Common myeloid progenitor, CD34-positive (primary cell): ENCODE measurements at regions of chr15 and their contacts with region 1.

Region 1: GRCh38 chr15:39786447-39787056 is 3.9 kb upstream of the FSIP1 start:
- DNase-seq: peak; percentile 66 to 75 (median 71)
- H3K4me3 ChIP-seq: no peak overlapping the region
- H3K27ac ChIP-seq: no peak overlapping the region
- H3K4me1 ChIP-seq: peaks cover 13 to 49% (median 27%) of the 10 kb centered on the region in 4 experiments
- H3K27me3 ChIP-seq: no peaks in the 10 kb centered on the region

Region 2: GRCh38 chr15:39797407-39797806 is 10.9 kb after region 1 on chr15:
- CTCF ChIA-PET with region 1: interaction called, 10 read pairs
- POLR2A ChIA-PET with region 1: no interaction called
- DNase-seq: no peak
- H3K4me3 ChIP-seq: no peak overlapping the region
- H3K27ac ChIP-seq: no peak overlapping the region
- H3K4me1 ChIP-seq: peaks cover 0 to 25% (median 3%) of the 10 kb centered on the region in 4 experiments
- H3K27me3 ChIP-seq: no peaks in the 10 kb centered on the region

Region 3: DNA sequence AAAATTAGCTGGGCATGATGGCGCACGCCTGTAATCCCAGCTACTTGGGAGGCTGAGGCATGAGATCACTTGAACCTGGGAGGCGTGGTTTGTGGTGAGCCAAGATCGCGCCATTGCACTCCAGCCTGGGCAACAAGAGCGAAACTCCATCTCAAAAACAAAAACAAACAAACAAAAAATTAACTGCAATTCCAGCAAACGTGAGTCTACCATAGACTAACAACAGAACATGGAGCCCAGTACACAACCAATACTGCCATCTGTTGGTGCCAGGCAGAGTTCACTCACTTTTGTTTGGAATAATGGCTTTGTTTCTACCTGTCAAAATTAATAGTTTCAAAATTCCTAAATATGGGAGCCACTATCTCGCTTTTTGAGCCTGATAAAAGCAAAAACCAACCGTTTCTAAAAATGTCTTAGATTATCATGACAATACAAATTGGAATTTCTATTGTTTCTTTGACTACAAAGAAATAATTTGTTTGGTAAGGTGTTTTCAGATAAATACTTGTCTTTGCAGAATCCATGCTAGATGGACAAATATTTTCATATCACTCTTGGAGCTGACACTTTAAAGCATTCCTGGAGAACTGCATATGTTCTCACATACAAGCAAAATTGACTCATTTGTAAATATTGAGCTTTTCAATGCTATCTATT is 88.5 kb after region 1 on chr15:
- CTCF ChIA-PET with region 1: interaction called, 45 read pairs
- POLR2A ChIA-PET with region 1: no interaction called
- DNase-seq: peak; percentile 46 to 67 (median 60)
- H3K4me3 ChIP-seq: no peak overlapping the region
- H3K27ac ChIP-seq: no peak overlapping the region
- H3K4me1 ChIP-seq: no peaks in the 10 kb centered on the region
- H3K27me3 ChIP-seq: no peaks in the 10 kb centered on the region